ENCODE measurements at regions of chr19 and their contacts with region 1.

Region 1: DNA sequence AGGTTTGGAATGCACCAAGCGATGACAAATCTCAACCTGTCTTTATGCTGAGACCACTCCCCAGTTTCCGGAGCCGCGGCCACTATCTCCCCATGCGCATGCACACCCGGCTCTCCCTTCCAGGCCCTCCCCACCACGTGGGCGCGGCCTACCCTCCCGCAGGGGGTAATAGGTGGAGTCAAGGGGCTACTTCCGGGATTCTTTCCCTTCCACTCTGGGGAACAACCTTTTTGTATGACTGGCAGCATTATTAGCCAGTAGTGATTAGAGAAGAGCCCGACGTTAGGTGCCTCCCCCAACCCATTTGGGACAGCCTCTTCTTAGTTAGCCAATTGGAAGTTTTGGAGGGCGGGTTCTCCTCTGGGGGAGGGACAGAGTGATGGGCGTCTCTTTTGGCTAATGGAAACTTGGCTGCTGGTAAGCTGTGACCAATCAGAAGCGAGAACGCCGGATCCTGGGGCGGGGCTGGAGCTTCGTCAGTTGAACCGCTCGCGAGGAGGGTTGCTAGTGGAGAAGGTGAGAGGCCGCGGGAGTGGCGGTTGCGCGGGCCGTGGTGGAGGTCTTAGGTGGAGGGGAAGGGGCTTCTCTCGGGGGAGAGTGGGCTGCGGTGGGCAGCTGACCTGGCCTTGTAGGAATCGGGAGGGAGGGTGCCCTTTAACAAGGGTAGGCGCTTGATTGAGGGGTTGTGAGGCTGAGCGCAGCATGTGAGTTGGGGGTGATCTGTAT is at the start of gene CCDC61:
- DNase-seq: peak; percentile 85
- ATAC-seq: peak; percentile 94
- H3K4me3 Mint-ChIP-seq: no peak within 1 kb of the TSS
- H3K27ac Mint-ChIP-seq: no peak within 1 kb of the TSS
- H3K4me1 Mint-ChIP-seq: peaks cover 23% of the 10 kb centered on the region
- H3K27me3 Mint-ChIP-seq: peaks cover 21% of the 10 kb centered on the region
- CTCF ChIP-seq: no peak
- total RNA-seq, gene CCDC61: 24.9 and 26.9 TPM in 2 replicates

Region 2: DNA sequence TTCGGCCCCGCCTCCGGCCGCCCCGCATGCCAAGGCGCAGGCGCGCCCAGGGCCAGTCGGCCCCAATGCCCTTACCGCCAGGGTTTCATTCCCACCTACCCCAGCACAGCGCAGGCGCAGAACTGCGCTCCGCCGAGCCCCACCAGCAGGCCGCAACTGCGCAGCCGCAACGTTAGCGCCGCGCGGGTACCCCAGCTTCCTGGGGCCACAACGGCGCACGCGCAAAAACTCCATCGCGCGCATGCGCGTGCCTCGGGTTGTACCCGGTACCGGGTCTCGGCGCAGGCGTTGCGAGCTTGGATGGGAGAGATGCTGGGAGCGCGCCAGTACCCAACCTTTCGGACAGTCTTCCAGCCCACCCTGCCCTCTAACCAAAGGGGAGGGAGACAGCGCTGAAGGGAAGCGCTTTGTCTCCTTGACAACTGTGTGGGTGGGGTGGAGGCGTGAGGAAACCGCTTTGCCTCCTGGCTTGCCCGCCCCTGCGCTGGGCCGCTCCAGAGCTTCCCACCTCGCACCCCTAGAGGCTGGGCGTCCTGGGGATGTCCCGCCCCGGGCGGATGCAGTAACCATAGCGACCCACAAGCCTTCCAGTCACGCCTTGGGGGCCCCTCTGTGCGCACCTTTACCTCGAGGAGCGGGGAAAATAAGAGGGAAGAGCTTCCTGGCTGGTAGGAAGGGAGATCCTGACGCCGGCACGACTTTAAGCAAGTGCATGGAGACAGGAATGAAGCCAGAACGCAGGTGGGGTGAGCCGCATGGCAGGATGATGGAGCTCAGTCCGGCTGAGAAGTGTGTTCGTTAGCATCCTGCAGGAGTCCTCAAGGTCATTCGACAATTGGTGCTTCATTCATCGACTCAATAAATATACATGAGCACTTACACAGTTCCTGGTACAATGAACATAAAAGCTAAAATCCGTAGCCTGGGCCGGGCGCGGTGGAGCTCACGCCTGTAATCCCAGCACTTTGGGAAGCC is 92.2 kb before region 1 on chr19:
- CTCF ChIA-PET with region 1: no interaction called
- POLR2A ChIA-PET with region 1: interaction called, 8 read pairs
- intact Hi-C with region 1: loop called (anchors 1 kb)
- DNase-seq: peak; percentile 99
- ATAC-seq: peak; percentile 82
- H3K4me3 Mint-ChIP-seq: peak overlapping the region; percentile 90
- H3K27ac Mint-ChIP-seq: peak overlapping the region; percentile 82
- H3K4me1 Mint-ChIP-seq: peaks cover 24% of the 10 kb centered on the region
- H3K27me3 Mint-ChIP-seq: no peaks in the 10 kb centered on the region
- CTCF ChIP-seq: no peak

Region 3: GRCh38 chr19:45927565-45928261 is 67.4 kb before region 1 on chr19:
- CTCF ChIA-PET with region 1: no interaction called
- POLR2A ChIA-PET with region 1: no interaction called
- intact Hi-C with region 1: loop called (anchors 2 kb)
- DNase-seq: peak; percentile 76
- ATAC-seq: peak; percentile 100
- H3K4me3 Mint-ChIP-seq: no peak overlapping the region
- H3K27ac Mint-ChIP-seq: no peak overlapping the region
- H3K4me1 Mint-ChIP-seq: peaks cover 9% of the 10 kb centered on the region
- H3K27me3 Mint-ChIP-seq: peaks cover 14% of the 10 kb centered on the region
- CTCF ChIP-seq: no peak

Region 4: GRCh38 chr19:46016426-46017094 is 21.4 kb after region 1 on chr19:
- CTCF ChIA-PET with region 1: interaction called, 6 read pairs
- POLR2A ChIA-PET with region 1: interaction called, 6 read pairs
- intact Hi-C with region 1: loop called (anchors 1 kb)
- DNase-seq: peak; percentile 74
- ATAC-seq: peak; percentile 82
- H3K4me3 Mint-ChIP-seq: peak overlapping the region; percentile 85
- H3K27ac Mint-ChIP-seq: peak overlapping the region; percentile 8
- H3K4me1 Mint-ChIP-seq: peaks cover 19% of the 10 kb centered on the region
- H3K27me3 Mint-ChIP-seq: peaks cover 12% of the 10 kb centered on the region
- CTCF ChIP-seq: no peak

Region 5: DNA sequence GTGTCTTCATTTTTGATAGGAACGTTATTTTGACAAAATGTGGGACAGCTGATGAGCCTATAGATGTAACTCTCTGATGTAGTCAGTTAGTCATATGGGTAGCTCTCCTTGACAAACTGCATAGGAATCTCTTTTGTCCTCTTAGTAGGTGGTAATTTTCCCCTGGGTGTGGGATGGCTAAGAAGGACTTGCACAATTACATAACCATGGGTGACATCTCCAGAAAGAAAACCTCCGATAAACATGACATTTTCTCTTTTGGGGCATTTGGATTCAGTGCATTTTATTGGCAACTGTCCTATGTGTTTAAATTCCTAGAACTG is 87.5 kb after region 1 on chr19:
- CTCF ChIA-PET with region 1: no interaction called
- POLR2A ChIA-PET with region 1: no interaction called
- intact Hi-C with region 1: no loop called
- DNase-seq: no peak
- ATAC-seq: no peak
- H3K4me3 Mint-ChIP-seq: no peak overlapping the region
- H3K27ac Mint-ChIP-seq: no peak overlapping the region
- H3K4me1 Mint-ChIP-seq: no peaks in the 10 kb centered on the region
- H3K27me3 Mint-ChIP-seq: peaks cover 51% of the 10 kb centered on the region
- CTCF ChIP-seq: no peak

Region 6: GRCh38 chr19:46181388-46181779 is 186.2 kb after region 1 on chr19:
- CTCF ChIA-PET with region 1: no interaction called
- POLR2A ChIA-PET with region 1: no interaction called
- intact Hi-C with region 1: no loop called
- DNase-seq: no peak
- ATAC-seq: no peak
- H3K4me3 Mint-ChIP-seq: no peak overlapping the region
- H3K27ac Mint-ChIP-seq: no peak overlapping the region
- H3K4me1 Mint-ChIP-seq: peaks cover 25% of the 10 kb centered on the region
- H3K27me3 Mint-ChIP-seq: peaks cover 12% of the 10 kb centered on the region
- CTCF ChIP-seq: no peak

Measured in activated B cell treated with CpG ODN at 0.5 μM for 24 hours (primary cell).